Ovary (tissue), 10 donors: ENCODE measurements at regions of chr5 and their contacts with region 1.

Region 1: GRCh38 chr5:14727428-14727865 is 62.9 kb downstream of the OTULIN start:
- DNase-seq: peak; percentile 73 to 87 (median 83)
- H3K4me3 ChIP-seq: no peak overlapping the region
- H3K27ac ChIP-seq: no peak overlapping the region
- H3K4me1 ChIP-seq: peaks cover 2% of the 10 kb centered on the region
- H3K27me3 ChIP-seq: no peaks in the 10 kb centered on the region
- CTCF ChIP-seq: peak; percentile 69 to 85 (median 70)
- EP300 ChIP-seq: no peak
- POLR2A ChIP-seq: no peak

Region 2: GRCh38 chr5:15003511-15003920 is 276.1 kb after region 1 on chr5:
- intact Hi-C with region 1: loop called (anchors 5 kb)
- DNase-seq: peak in 4 of 5 donors; percentile 23 to 45 (median 32)
- H3K4me3 ChIP-seq: no peak overlapping the region
- H3K27ac ChIP-seq: no peak overlapping the region
- H3K4me1 ChIP-seq: no peaks in the 10 kb centered on the region
- H3K27me3 ChIP-seq: no peaks in the 10 kb centered on the region
- CTCF ChIP-seq: peak; percentile 42 to 67 (median 43)
- EP300 ChIP-seq: no peak
- POLR2A ChIP-seq: no peak